ENCODE measurements at regions of chr7 and their contacts with region 1.

Region 1: GRCh38 chr7:122006687-122007086 is 133.7 kb downstream of the PTPRZ1 start:
- DNase-seq: no peak
- ATAC-seq: no peak
- H3K4me3 Mint-ChIP-seq: no peak overlapping the region
- H3K27ac Mint-ChIP-seq: no peak overlapping the region
- H3K4me1 Mint-ChIP-seq: no peaks in the 10 kb centered on the region
- H3K27me3 Mint-ChIP-seq: no peaks in the 10 kb centered on the region

Region 2: GRCh38 chr7:121891731-121892130 is 115.0 kb before region 1 on chr7:
- CTCF ChIA-PET with region 1: no interaction called
- DNase-seq: no peak
- ATAC-seq: no peak
- H3K4me3 Mint-ChIP-seq: no peak overlapping the region
- H3K27ac Mint-ChIP-seq: no peak overlapping the region
- H3K4me1 Mint-ChIP-seq: no peaks in the 10 kb centered on the region
- H3K27me3 Mint-ChIP-seq: no peaks in the 10 kb centered on the region

Region 3: DNA sequence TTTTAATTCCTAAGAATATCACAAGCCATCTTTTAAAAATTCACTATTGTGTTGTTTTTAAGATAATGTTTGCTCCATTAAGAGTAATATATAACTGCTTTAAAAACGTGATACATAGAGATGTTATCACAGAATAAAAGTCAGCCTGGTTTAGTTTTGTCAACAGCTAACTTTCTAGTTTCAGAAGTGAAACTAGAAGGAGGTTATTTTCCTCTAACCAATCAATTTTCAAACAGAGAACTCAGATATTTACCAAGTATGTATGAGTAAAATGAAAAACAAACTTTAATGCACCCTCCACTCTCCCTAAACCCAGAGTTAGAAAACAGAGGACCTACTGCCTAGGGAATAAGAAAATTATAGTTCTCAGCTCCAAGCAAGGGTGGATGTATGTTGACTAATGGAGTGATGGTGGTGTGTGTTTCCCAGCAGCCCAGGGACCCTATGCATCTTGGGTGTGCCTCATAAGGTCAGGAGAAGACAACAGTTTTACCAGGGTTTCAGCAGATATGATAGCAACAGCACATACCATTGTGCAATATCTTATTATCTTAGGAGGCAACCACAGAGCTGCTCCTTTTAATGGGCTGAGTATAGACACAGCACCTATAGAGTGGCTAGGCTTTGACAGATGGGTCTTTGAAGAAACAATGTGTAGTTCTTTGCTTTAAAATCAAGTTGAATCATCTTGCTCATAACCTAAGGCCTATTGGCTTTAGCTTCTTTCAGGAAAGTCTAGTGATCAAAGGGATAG is 75.4 kb before region 1 on chr7:
- CTCF ChIA-PET with region 1: no interaction called
- DNase-seq: no peak
- ATAC-seq: no peak
- H3K4me3 Mint-ChIP-seq: no peak overlapping the region
- H3K27ac Mint-ChIP-seq: no peak overlapping the region
- H3K4me1 Mint-ChIP-seq: no peaks in the 10 kb centered on the region
- H3K27me3 Mint-ChIP-seq: no peaks in the 10 kb centered on the region

Region 4: DNA sequence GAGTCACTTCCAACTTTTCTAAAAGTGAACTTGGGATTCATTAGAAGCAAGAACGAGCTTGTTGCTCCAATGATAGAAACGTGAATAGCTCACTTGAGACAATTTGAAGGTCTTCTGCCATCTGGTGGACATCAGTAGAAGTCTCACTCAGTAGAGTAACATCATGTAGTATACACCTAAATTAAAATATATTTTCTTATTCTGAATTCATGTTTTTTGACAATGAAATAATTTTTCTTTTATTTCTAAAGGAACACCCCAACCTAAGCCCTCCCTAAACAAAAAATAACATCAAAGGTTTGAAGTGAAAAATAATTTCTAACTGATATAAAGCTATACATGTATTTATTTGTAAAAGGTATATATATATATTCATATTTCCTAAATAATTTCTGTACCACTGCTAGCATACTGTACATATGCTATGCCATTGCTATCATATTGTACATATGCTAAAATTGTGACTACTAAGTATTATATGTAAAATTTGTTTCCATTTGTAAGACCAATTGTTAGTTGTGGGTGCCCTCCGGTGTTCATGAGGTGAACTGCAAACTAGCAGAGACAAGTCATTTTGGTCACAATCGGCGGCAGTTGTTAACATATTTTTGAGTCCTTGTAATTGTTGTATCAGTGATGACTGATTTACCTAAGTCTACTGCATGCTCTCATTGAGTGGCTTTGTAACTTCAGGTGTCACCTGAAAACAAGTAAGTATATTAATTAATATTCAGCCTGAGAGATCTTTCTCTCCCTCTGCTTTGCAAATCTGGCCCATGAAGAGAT is 11.9 kb before region 1 on chr7:
- CTCF ChIA-PET with region 1: interaction called, 11 read pairs
- DNase-seq: peak; percentile 68
- ATAC-seq: peak; percentile 67
- H3K4me3 Mint-ChIP-seq: no peak overlapping the region
- H3K27ac Mint-ChIP-seq: no peak overlapping the region
- H3K4me1 Mint-ChIP-seq: no peaks in the 10 kb centered on the region
- H3K27me3 Mint-ChIP-seq: no peaks in the 10 kb centered on the region

Region 5: GRCh38 chr7:122027058-122027457 is 20.4 kb after region 1 on chr7:
- CTCF ChIA-PET with region 1: no interaction called
- DNase-seq: no peak
- ATAC-seq: no peak
- H3K4me3 Mint-ChIP-seq: no peak overlapping the region
- H3K27ac Mint-ChIP-seq: no peak overlapping the region
- H3K4me1 Mint-ChIP-seq: no peaks in the 10 kb centered on the region
- H3K27me3 Mint-ChIP-seq: no peaks in the 10 kb centered on the region